Activated naive CD4-positive, alpha-beta T cell treated with anti-CD3 and anti-CD28 coated beads for 36 hours (primary cell): ENCODE measurements at regions of chr1 and their contacts with region 1.

Region 1: GRCh38 chr1:89047734-89048133 is 17.3 kb downstream of the GBP1 start:
- DNase-seq: no peak
- H3K4me3 Mint-ChIP-seq: no peak overlapping the region
- H3K27ac Mint-ChIP-seq: no peak overlapping the region
- H3K4me1 Mint-ChIP-seq: peaks cover 11% of the 10 kb centered on the region
- H3K27me3 Mint-ChIP-seq: no peaks in the 10 kb centered on the region

Region 2: GRCh38 chr1:88867743-88868521 is 179.8 kb before region 1 on chr1:
- CTCF ChIA-PET with region 1: no interaction called
- intact Hi-C with region 1: loop called (anchors 5 kb)
- DNase-seq: no peak
- H3K4me3 Mint-ChIP-seq: no peak overlapping the region
- H3K27ac Mint-ChIP-seq: peak overlapping the region; percentile 84
- H3K4me1 Mint-ChIP-seq: peaks cover 57% of the 10 kb centered on the region
- H3K27me3 Mint-ChIP-seq: no peaks in the 10 kb centered on the region